ENCODE measurements at regions of chr1 and their contacts with region 1.

Region 1: GRCh38 chr1:31944205-31945089 is 6.3 kb upstream of the PTP4A2 start:
- DNase-seq: peak; percentile 66
- H3K4me3 ChIP-seq: peak overlapping the region; percentile 26 to 33
- H3K27ac ChIP-seq: peak overlapping the region; percentile 86 to 92
- H3K4me1 ChIP-seq: no peaks in the 10 kb centered on the region
- H3K27me3 ChIP-seq: no peaks in the 10 kb centered on the region
- CTCF ChIP-seq: no peak
- POLR2A ChIP-seq: peak; percentile 7

Region 2: GRCh38 chr1:32013386-32014198 is 69.1 kb after region 1 on chr1 and contains the start of gene KHDRBS1:
- intact Hi-C with region 1: loop called (anchors 5 kb)
- DNase-seq: peak; percentile 98
- H3K4me3 ChIP-seq: peak within 1 kb of the TSS; percentile 96 to 98
- H3K27ac ChIP-seq: peak within 1 kb of the TSS; percentile 97 to 98
- H3K4me1 ChIP-seq: peaks cover 5% of the 10 kb centered on the region
- H3K27me3 ChIP-seq: no peaks in the 10 kb centered on the region
- CTCF ChIP-seq: peak in 2 of 4 experiments; percentile 14 to 23
- POLR2A ChIP-seq: peak; percentile 87
- total RNA-seq, gene KHDRBS1: 77.3 to 77.6 TPM